Transverse colon (tissue), 4 donors: ENCODE measurements at regions of chr18 and their contacts with region 1.

Region 1: DNA sequence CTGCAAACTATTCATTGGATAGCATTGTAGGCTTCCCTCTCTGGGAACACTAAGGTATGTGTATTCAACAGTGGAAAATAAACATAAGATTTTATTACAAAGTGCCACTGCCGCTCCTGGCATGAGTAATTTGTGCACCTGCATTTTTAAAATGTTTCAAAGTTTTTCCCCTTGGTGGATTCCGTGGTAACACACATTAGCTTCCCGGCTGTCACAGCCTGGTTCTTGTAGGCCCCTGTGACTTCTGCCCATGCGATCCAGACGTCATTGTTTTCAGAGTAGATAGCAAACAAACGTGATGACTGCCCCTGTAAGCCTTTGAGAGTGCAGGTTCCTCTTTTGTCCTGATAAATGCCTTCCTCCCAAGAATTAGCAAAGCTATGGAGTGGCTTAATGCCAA is 421.0 kb downstream of the ZNF521 start:
- DNase-seq: no peak
- H3K4me3 ChIP-seq: no peak overlapping the region
- H3K27ac ChIP-seq: no peak overlapping the region
- H3K4me1 ChIP-seq: peaks cover 0 to 5% (median 0%) of the 10 kb centered on the region in 4 donors
- H3K27me3 ChIP-seq: no peaks in the 10 kb centered on the region
- CTCF ChIP-seq: no peak
- EP300 ChIP-seq: no peak
- POLR2A ChIP-seq: no peak

Region 2: GRCh38 chr18:24837066-24837465 is 93.9 kb before region 1 on chr18:
- in situ Hi-C with region 1: loop called in 1 of 4 experiments (anchors 25 kb)
- intact Hi-C with region 1: no loop called
- DNase-seq: no peak
- H3K4me3 ChIP-seq: no peak overlapping the region
- H3K27ac ChIP-seq: no peak overlapping the region
- H3K4me1 ChIP-seq: no peaks in the 10 kb centered on the region
- H3K27me3 ChIP-seq: no peaks in the 10 kb centered on the region
- CTCF ChIP-seq: no peak
- EP300 ChIP-seq: no peak
- POLR2A ChIP-seq: no peak